ENCODE measurements at regions of chr5 and their contacts with region 1.

Region 1: DNA sequence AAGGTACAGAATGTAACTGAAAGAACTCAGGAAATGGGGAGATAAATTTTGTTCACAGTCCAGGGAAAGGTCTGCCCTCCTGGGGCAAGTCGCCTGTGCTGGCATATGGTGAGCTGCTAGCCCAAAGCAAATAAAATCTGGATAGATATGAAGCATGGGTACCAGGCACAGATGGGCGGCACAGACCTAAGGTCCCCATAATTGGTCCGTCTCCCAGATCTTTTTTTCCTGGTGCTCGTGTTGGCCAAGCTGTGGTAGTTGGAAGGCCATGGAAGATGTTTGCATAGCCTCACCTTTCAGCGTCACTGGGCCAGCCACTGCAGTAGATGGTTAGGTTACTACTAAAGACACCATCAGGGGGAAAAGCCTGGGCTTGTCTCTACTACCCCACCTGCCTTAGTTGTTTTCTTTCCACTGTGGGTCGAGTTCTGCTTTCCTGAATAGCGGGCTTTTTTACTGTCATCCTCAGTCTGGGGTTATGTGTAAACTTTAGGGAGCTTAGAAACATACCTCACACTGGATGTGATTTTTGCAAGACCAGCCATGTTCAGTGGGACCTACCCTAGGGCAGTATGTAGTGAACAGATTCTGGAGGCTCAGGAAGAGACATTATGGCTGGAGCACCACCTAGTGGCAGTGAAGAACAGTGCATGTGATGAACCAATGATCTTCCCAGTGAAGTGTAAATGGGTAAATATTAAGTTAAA is 24.2 kb upstream of the GLRX start:
- DNase-seq: peak; percentile 82
- CTCF ChIP-seq: peak; percentile 93

Region 2: DNA sequence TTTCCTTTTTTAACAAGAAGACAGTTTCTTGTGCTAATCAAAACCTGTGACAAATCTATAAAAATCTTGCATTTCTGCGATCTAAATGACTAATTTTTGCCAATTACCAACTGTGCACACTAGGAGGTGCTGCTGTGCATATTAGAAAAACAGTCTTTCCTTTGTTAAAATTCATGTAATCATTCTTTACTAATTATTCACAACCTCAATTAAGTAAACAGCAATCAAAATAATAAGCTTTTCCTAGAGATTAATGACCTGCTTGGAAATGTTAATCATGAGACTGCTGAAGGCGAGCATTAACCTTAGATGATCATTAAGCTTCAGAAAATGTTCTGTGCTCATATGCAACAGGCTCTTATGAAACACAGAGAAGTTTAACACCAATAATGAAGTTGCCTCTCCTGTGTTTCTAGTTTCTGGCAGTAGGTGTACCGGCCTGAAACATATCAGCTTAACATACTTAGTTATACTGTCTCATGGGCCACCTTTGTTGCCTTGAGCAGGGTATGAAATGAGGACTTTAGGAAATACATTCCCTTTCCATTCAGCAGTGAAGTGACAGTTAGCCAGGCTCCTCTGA is 182.4 kb before region 1 on chr5:
- in situ Hi-C with region 1: loop called (anchors 10 kb)
- DNase-seq: peak; percentile 23
- CTCF ChIP-seq: peak; percentile 84

Region 3: GRCh38 chr5:95781101-95781583 is 65.6 kb before region 1 on chr5:
- in situ Hi-C with region 1: loop called (anchors 5 kb)
- DNase-seq: peak; percentile 70
- CTCF ChIP-seq: peak; percentile 90

Region 4: GRCh38 chr5:95984287-95984938 is 137.7 kb after region 1 on chr5:
- in situ Hi-C with region 1: no loop called
- DNase-seq: no peak
- CTCF ChIP-seq: no peak

Region 5: DNA sequence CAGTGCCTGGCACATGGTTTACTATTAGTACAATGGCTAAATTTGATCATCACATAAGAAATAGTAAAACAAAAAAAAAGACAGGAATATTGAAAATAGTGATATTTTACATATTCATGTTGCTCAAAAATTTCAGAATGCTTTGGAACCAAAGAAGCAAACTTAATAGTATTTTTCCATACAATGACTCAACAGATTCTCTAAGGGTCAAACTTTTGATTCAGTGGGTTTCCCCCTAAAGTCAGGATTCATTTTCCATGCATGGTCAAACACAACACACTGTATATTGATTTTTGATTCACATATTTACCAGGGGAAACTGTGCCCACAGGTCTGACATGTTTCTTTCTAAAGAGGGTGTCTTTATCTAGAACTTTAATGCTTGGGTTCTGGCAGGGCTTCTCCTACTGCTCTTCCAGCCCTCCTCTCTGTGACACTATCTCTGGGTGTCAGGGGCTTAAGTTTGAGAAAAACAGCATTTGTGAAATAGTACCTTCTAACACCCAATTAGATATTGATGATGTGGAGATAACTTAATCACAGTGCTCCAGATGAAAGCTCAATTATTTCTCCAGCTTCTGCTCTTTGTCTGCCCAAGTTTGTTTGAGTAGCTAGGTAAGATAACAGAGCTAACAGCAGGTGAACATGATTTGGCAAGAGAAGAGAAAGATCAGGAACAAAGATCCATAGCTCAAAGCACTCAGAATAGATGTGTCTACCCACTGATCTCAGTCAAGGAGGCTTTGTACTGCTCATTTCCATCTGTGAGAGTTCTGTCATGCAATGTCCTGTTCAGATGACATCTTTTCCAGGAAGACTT is 150.4 kb after region 1 on chr5:
- in situ Hi-C with region 1: no loop called
- DNase-seq: no peak
- CTCF ChIP-seq: no peak

Measured in GM13977 (cell line).